WTC11 (cell line): ENCODE measurements at regions of chr17 and their contacts with region 1.

Region 1: GRCh38 chr17:75109407-75110233 is at the start of gene ARMC7:
- DNase-seq: peak; percentile 95
- ATAC-seq: peak; percentile 68
- H3K4me3 Mint-ChIP-seq: peak within 1 kb of the TSS; percentile 90
- H3K27ac Mint-ChIP-seq: peak within 1 kb of the TSS; percentile 94
- H3K4me1 Mint-ChIP-seq: peaks cover 25% of the 10 kb centered on the region
- H3K27me3 Mint-ChIP-seq: no peaks in the 10 kb centered on the region
- CTCF ChIP-seq: no peak
- total RNA-seq, gene ARMC7: 13.2 to 15.9 TPM (median 14.8 TPM) in 3 replicates

Region 2: GRCh38 chr17:74972107-74972972 is 137.3 kb before region 1 on chr17 and contains the start of gene HID1:
- CTCF ChIA-PET with region 1: interaction called, 11 read pairs
- POLR2A ChIA-PET with region 1: interaction called, 4 read pairs
- DNase-seq: peak; percentile 89
- ATAC-seq: peak; percentile 83
- H3K4me3 Mint-ChIP-seq: peak within 1 kb of the TSS; percentile 90
- H3K27ac Mint-ChIP-seq: no peak within 1 kb of the TSS
- H3K4me1 Mint-ChIP-seq: peaks cover 12% of the 10 kb centered on the region
- H3K27me3 Mint-ChIP-seq: peaks cover 55% of the 10 kb centered on the region
- CTCF ChIP-seq: no peak
- total RNA-seq, gene HID1: 16.7 to 19.4 TPM (median 19.3 TPM) in 3 replicates

Region 3: DNA sequence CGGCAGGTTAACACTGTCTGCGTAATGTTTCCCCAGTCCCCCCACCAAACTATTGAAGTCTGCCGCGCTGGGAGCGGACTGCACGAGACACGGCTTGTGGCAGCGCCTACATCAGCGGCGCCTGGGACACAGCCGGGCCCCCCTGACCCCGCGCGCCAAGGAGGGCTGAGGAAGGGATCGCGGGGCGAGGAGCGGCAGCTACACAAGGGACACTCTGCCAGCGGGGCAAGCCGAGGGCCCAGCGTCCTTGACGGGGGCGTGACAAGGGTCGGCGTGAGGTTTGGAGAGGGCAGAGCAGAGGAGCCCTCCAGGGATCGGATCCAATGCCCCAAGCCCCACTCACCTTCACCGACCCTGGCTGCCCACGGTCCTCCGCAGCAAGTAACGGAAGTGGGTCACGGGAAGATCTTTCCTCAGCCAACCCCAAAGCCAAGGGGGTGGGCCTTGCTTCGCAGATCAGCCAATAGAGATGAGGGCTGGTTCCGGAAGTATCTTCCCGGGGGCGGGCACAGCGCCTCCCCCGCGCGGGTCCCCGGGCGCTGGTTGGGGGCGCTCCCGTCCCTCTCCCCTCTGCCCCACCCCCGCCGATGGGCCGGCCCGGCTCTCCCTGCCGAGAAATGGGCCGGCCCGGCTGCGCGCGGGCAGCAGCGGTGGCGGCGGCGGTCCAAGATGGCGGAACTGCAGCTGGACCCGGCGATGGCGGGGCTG is 62.9 kb before region 1 on chr17 and contains the starts of genes ATP5PD and KCTD2:
- CTCF ChIA-PET with region 1: interaction called, 11 read pairs
- POLR2A ChIA-PET with region 1: no interaction called
- DNase-seq: peak; percentile 97
- ATAC-seq: peak; percentile 95
- H3K4me3 Mint-ChIP-seq: peak within 1 kb of the TSS; percentile 99
- H3K27ac Mint-ChIP-seq: peak within 1 kb of the TSS; percentile 96
- H3K4me1 Mint-ChIP-seq: peaks cover 44% of the 10 kb centered on the region
- H3K27me3 Mint-ChIP-seq: no peaks in the 10 kb centered on the region
- CTCF ChIP-seq: no peak
- total RNA-seq, gene ATP5PD: 383 to 427 TPM (median 419 TPM) in 3 replicates
- total RNA-seq, gene KCTD2: 31.3 to 34.0 TPM (median 32.8 TPM) in 3 replicates

Region 4: GRCh38 chr17:75077496-75078283 is 31.9 kb before region 1 on chr17:
- CTCF ChIA-PET with region 1: interaction called, 13 read pairs
- POLR2A ChIA-PET with region 1: interaction called, 3 read pairs
- DNase-seq: peak; percentile 51
- ATAC-seq: peak; percentile 51
- H3K4me3 Mint-ChIP-seq: peak overlapping the region; percentile 54
- H3K27ac Mint-ChIP-seq: no peak overlapping the region
- H3K4me1 Mint-ChIP-seq: peaks cover 28% of the 10 kb centered on the region
- H3K27me3 Mint-ChIP-seq: peaks cover 12% of the 10 kb centered on the region
- CTCF ChIP-seq: no peak

Region 5: GRCh38 chr17:75124041-75124818 is 14.6 kb after region 1 on chr17:
- CTCF ChIA-PET with region 1: interaction called, 84 read pairs
- POLR2A ChIA-PET with region 1: interaction called, 4 read pairs
- DNase-seq: no peak
- ATAC-seq: no peak
- H3K4me3 Mint-ChIP-seq: no peak overlapping the region
- H3K27ac Mint-ChIP-seq: peak overlapping the region; percentile 23; the same call in 1 of the 2 replicates
- H3K4me1 Mint-ChIP-seq: peaks cover 10% of the 10 kb centered on the region
- H3K27me3 Mint-ChIP-seq: no peaks in the 10 kb centered on the region
- CTCF ChIP-seq: no peak

Region 6: GRCh38 chr17:75173526-75173925 is 63.9 kb after region 1 on chr17:
- CTCF ChIA-PET with region 1: interaction called, 32 read pairs
- POLR2A ChIA-PET with region 1: interaction called, 6 read pairs
- DNase-seq: no peak
- ATAC-seq: no peak
- H3K4me3 Mint-ChIP-seq: no peak overlapping the region
- H3K27ac Mint-ChIP-seq: peak overlapping the region; percentile 55
- H3K4me1 Mint-ChIP-seq: no peaks in the 10 kb centered on the region
- H3K27me3 Mint-ChIP-seq: no peaks in the 10 kb centered on the region
- CTCF ChIP-seq: no peak

Region 7: DNA sequence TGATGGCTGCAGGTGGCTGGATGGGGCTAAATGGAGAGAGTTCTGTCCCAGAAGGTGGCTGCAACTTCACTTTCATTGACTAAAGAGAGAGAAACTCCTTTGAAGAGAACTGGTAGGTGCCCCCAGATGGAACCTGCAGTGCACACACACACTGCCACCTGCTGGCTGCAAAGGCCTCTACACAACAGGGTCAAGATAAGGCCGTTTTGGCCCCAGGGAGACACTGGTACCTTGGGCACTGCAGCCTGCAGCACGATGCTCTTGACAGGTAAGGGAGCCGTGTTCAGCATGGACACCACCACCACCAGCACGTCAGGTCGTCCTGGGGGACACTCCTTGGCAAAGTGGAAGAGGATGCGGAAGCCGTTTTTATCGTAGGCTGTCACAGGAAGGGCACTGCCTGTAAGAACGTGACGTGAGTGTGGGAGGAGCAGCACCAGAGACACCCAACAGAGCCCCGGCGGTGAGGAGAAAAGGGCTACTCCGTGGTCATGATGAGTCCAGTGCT is 129.1 kb after region 1 on chr17:
- CTCF ChIA-PET with region 1: interaction called, 40 read pairs
- POLR2A ChIA-PET with region 1: no interaction called
- DNase-seq: peak; percentile 60
- ATAC-seq: peak; percentile 68
- H3K4me3 Mint-ChIP-seq: no peak overlapping the region
- H3K27ac Mint-ChIP-seq: peak overlapping the region; percentile 99
- H3K4me1 Mint-ChIP-seq: peaks cover 6% of the 10 kb centered on the region
- H3K27me3 Mint-ChIP-seq: no peaks in the 10 kb centered on the region
- CTCF ChIP-seq: peak; percentile 66

Region 8: GRCh38 chr17:75352079-75352569 is 242.5 kb after region 1 on chr17:
- CTCF ChIA-PET with region 1: no interaction called
- POLR2A ChIA-PET with region 1: no interaction called
- DNase-seq: peak; percentile 66
- ATAC-seq: peak; percentile 94
- H3K4me3 Mint-ChIP-seq: peak overlapping the region; percentile 10; the same call in 1 of the 2 replicates
- H3K27ac Mint-ChIP-seq: peak overlapping the region; percentile 97
- H3K4me1 Mint-ChIP-seq: peaks cover 53% of the 10 kb centered on the region
- H3K27me3 Mint-ChIP-seq: no peaks in the 10 kb centered on the region
- CTCF ChIP-seq: no peak